ENCODE measurements at regions of chr20 and their contacts with region 1.

Region 1: DNA sequence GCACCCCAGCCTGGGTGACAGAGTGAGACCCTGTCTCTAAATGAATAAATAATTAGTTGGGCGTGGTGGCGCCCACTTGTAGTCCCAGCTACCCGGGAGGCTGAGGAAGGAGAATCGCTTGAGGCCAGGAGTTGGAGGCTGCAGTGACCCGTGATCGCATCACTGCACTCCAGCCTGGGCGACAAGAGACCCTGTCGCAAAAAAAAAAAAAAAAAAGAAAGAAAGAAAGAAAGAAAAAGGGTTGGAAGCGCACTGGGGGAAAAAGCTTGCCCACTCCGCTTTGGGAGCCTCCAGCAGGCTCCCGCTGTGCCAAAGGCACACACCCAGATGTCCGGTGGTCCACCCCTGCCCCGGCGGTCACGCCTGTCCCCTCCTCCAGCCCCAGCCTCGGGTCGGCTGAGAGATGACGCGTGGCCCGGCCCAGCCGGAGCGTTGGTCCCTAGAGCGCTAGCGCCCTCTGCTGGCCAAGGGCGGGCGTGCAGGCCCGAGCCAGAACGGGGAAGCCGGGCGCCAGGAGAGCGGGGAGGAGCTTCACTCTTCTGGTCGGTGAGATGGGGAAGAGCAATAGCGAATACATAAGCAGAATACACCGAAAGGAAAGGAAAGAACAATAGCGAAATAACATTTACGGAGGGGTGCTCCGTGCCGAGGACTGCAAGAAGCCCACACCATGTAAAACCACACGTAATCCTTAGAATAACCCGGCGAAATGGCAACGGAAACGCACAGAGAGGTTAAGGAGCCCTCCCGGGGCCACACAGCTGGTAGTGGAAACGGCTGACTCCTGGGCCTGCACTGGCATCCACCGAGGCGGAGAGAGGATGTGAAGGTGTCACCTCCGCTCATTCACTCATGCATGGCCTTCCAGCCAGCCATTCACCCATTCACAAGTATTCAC is 41.7 kb downstream of the UBE2V1 start:
- DNase-seq: peak; percentile 85
- H3K4me3 ChIP-seq: peak overlapping the region in 1 of 3 experiments; percentile 32
- H3K27ac ChIP-seq: no peak overlapping the region
- H3K4me1 ChIP-seq: no peaks in the 10 kb centered on the region
- H3K27me3 ChIP-seq: no peaks in the 10 kb centered on the region
- CTCF ChIP-seq: peak; percentile 99 to 100
- POLR2A ChIP-seq: no peak

Region 2: DNA sequence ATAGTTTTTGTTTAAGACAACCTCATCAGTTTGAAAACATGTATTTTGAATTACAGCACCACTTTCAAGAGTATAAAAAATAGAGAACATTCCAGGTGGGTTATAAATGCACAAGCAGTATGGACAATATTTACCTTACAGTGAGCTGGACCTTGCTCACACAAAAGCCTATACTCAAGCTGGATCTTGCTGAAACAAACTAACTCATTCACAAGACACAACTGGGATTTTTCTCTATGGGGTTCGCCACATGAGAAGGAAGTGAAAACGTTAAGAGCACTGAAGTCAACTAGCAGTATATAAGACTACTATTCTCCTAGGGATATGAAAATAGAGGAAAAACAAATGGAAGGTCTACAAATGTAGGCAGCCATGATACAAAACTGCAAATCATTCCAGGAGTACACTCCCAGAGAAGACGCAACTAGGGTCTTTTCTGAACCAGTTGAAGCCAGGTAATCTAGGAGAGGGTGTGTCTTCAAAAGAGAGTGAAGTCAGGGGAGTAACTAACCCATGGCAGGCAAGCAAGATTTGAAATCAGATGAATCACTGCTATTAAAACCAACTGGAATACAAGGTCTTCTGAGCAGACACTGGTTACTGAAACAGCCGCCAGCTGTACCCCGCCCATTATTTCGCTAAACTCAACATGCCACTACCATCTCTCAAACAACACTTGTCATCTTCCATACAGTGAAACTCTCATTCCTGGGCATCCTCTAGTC is 909.6 kb before region 1 on chr20:
- CTCF ChIA-PET with region 1: no interaction called
- POLR2A ChIA-PET with region 1: no interaction called
- dilution Hi-C with region 1: no loop called
- intact Hi-C with region 1: no loop called
- DNase-seq: no peak
- H3K4me3 ChIP-seq: no peak overlapping the region
- H3K27ac ChIP-seq: no peak overlapping the region
- H3K4me1 ChIP-seq: peaks cover 2% of the 10 kb centered on the region
- H3K27me3 ChIP-seq: no peaks in the 10 kb centered on the region
- CTCF ChIP-seq: no peak
- POLR2A ChIP-seq: no peak

Region 3: GRCh38 chr20:49888345-49888966 is 182.8 kb before region 1 on chr20:
- CTCF ChIA-PET with region 1: interaction called, 10 read pairs
- POLR2A ChIA-PET with region 1: no interaction called
- dilution Hi-C with region 1: no loop called
- intact Hi-C with region 1: no loop called
- DNase-seq: peak; percentile 73
- H3K4me3 ChIP-seq: no peak overlapping the region
- H3K27ac ChIP-seq: no peak overlapping the region
- H3K4me1 ChIP-seq: peaks cover 20% of the 10 kb centered on the region
- H3K27me3 ChIP-seq: no peaks in the 10 kb centered on the region
- CTCF ChIP-seq: peak; percentile 80 to 88
- POLR2A ChIP-seq: no peak

Region 4: DNA sequence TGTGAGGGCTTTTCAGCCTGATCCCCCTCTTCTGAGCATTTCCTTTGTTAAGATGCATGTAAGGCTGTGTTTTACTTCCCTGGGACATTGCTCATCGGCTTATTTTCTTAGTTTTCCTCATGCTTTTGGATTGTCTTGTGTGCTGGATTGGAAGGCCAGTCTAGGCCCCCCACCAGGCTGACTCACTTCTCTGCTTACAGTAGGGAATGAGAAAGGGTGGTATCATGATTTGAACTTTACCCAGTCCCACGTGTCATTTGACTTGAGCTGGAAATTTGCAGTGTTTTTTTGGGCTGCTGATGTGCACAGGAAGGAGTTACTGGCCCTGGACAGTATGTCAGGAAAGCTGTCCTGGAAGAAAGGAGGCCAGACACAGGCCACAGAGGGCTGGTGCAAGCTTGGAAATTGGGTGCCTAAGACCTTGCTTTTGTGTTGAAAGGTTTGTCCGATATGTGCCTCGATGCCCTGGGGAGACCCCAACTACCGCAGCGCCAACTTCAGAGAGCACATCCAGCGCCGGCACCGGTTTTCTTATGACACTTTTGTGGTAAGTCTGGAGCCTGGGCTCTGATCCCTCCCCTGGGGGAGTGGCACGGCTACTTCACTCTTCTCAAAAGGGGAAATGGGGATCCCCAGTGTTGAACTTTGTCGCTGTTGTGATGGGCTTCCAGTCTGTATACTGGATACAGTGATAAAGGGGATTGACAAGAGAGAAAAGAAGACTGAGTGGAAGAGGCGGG is 122.3 kb before region 1 on chr20:
- CTCF ChIA-PET with region 1: interaction called, 16 read pairs
- POLR2A ChIA-PET with region 1: no interaction called
- dilution Hi-C with region 1: no loop called
- intact Hi-C with region 1: no loop called
- DNase-seq: no peak
- H3K4me3 ChIP-seq: no peak overlapping the region
- H3K27ac ChIP-seq: no peak overlapping the region
- H3K4me1 ChIP-seq: peaks cover 10% of the 10 kb centered on the region
- H3K27me3 ChIP-seq: no peaks in the 10 kb centered on the region
- CTCF ChIP-seq: no peak
- POLR2A ChIP-seq: no peak

Region 5: GRCh38 chr20:50012282-50013263 is 58.7 kb before region 1 on chr20:
- CTCF ChIA-PET with region 1: interaction called, 16 read pairs
- POLR2A ChIA-PET with region 1: no interaction called
- dilution Hi-C with region 1: no loop called
- intact Hi-C with region 1: no loop called
- DNase-seq: no peak
- H3K4me3 ChIP-seq: no peak overlapping the region
- H3K27ac ChIP-seq: no peak overlapping the region
- H3K4me1 ChIP-seq: peaks cover 6% of the 10 kb centered on the region
- H3K27me3 ChIP-seq: no peaks in the 10 kb centered on the region
- CTCF ChIP-seq: no peak
- POLR2A ChIP-seq: no peak

Region 6: DNA sequence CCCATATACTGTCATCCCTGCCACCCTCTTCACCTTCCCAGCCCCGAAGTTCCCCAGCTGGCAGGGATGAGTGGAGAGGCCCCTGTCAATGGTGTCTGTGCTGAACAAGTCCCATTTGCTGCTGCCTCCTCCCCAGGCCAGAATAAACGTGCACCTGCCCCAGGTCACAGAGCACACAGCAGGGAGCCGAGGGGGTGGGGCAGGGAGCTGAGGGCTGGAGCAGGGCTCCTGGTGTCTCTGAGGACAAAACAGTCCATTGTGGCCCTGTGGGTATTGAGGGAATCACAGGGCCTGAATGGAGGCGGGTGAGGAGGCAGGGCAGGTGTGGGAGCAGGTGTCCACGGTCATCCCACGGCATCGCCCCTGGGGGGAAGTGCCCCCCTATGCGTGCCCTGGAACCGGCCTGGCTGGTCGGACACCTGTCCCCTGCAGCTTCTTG is 32.6 kb before region 1 on chr20:
- CTCF ChIA-PET with region 1: interaction called, 15 read pairs
- POLR2A ChIA-PET with region 1: no interaction called
- dilution Hi-C with region 1: no loop called
- intact Hi-C with region 1: loop called (anchors 5 kb)
- DNase-seq: no peak
- H3K4me3 ChIP-seq: no peak overlapping the region
- H3K27ac ChIP-seq: no peak overlapping the region
- H3K4me1 ChIP-seq: peaks cover 13% of the 10 kb centered on the region
- H3K27me3 ChIP-seq: no peaks in the 10 kb centered on the region
- CTCF ChIP-seq: no peak
- POLR2A ChIP-seq: no peak

Region 7: GRCh38 chr20:50085452-50086365 is 14.5 kb after region 1 on chr20:
- CTCF ChIA-PET with region 1: interaction called, 65 read pairs
- POLR2A ChIA-PET with region 1: interaction called, 3 read pairs
- dilution Hi-C with region 1: no loop called
- intact Hi-C with region 1: loop called (anchors 1 kb)
- DNase-seq: peak; percentile 85
- H3K4me3 ChIP-seq: peak overlapping the region in 1 of 3 experiments; percentile 31
- H3K27ac ChIP-seq: peak overlapping the region; percentile 91
- H3K4me1 ChIP-seq: peaks cover 19% of the 10 kb centered on the region
- H3K27me3 ChIP-seq: no peaks in the 10 kb centered on the region
- CTCF ChIP-seq: peak; percentile 71 to 80
- POLR2A ChIP-seq: no peak

Region 8: GRCh38 chr20:50165684-50166554 is 94.7 kb after region 1 on chr20:
- CTCF ChIA-PET with region 1: interaction called, 36 read pairs
- POLR2A ChIA-PET with region 1: no interaction called
- dilution Hi-C with region 1: no loop called
- intact Hi-C with region 1: loop called (anchors 1 kb)
- DNase-seq: peak; percentile 100
- H3K4me3 ChIP-seq: peak overlapping the region in 2 of 3 experiments; percentile 14 to 37
- H3K27ac ChIP-seq: peak overlapping the region; percentile 89
- H3K4me1 ChIP-seq: peaks cover 12% of the 10 kb centered on the region
- H3K27me3 ChIP-seq: no peaks in the 10 kb centered on the region
- CTCF ChIP-seq: no peak
- POLR2A ChIP-seq: peak; percentile 78

Measured in endothelial cell of umbilical vein (primary cell).